SK-N-SH (cell line): ENCODE measurements at regions of chr1 and their contacts with region 1.

Region 1: DNA sequence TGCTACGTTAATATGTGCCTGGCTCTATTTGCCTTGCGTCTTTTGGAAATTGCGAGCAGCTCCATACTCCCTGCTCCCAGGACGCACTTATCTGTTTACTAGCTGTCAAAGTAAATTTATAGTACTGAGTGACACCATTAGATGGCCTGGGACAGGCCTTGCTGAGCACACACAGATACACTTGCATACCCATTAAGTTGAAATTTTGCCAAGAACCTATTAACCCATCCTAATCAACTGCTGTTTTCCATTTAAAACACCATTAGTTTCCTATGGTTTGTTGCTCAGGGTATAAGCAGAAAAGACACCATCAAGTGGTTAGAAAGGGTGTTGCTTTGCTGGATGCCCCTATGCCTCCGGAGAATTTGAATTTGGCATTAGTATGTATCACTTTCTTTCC is 187.3 kb downstream of the SLC44A5 start:
- DNase-seq: peak; percentile 70
- H3K4me3 ChIP-seq: no peak overlapping the region
- H3K27ac ChIP-seq: peak overlapping the region in 1 of 2 experiments; percentile 83; a peak in 2 of 4 replicates
- H3K4me1 ChIP-seq: peaks cover 0 to 14% of the 10 kb centered on the region in 2 experiments; a peak in 2 of 4 replicates
- H3K27me3 ChIP-seq: no peaks in the 10 kb centered on the region
- CTCF ChIP-seq: peak; percentile 19
- EP300 ChIP-seq: peak in 1 of 2 experiments; percentile 94; a peak in 2 of 4 replicates
- RAD21 ChIP-seq: peak; percentile 74

Region 2: GRCh38 chr1:75273110-75273509 is 150.5 kb before region 1 on chr1:
- CTCF ChIA-PET with region 1: interaction called, 15 read pairs
- POLR2A ChIA-PET with region 1: no interaction called
- DNase-seq: no peak
- H3K4me3 ChIP-seq: no peak overlapping the region
- H3K27ac ChIP-seq: no peak overlapping the region
- H3K4me1 ChIP-seq: peaks cover 0 to 10% of the 10 kb centered on the region in 2 experiments; a peak in 3 of 4 replicates
- H3K27me3 ChIP-seq: no peaks in the 10 kb centered on the region
- CTCF ChIP-seq: no peak
- EP300 ChIP-seq: no peak
- RAD21 ChIP-seq: no peak